PC-3 (cell line): ENCODE measurements at regions of chr4 and their contacts with region 1.

Region 1: GRCh38 chr4:157999743-158000142 is 173.1 kb downstream of the GASK1B start:
- DNase-seq: peak; percentile 58
- ATAC-seq: peak; percentile 91
- H3K4me3 ChIP-seq: no peak overlapping the region
- H3K27ac ChIP-seq: no peak overlapping the region
- H3K4me1 ChIP-seq: peaks cover 17% of the 10 kb centered on the region
- H3K27me3 ChIP-seq: no peaks in the 10 kb centered on the region
- CTCF ChIP-seq: no peak

Region 2: GRCh38 chr4:158020176-158020575 is 20.4 kb after region 1 on chr4:
- CTCF ChIA-PET with region 1: no interaction called
- POLR2A ChIA-PET with region 1: no interaction called
- intact Hi-C with region 1: loop called (anchors 1 kb)
- DNase-seq: peak; percentile 75
- ATAC-seq: peak; percentile 77
- H3K4me3 ChIP-seq: 0 out of 2 replicates have a peak overlapping the region, but pooled peaks have one; percentile 6
- H3K27ac ChIP-seq: peak overlapping the region; percentile 60
- H3K4me1 ChIP-seq: peaks cover 33% of the 10 kb centered on the region
- H3K27me3 ChIP-seq: no peaks in the 10 kb centered on the region
- CTCF ChIP-seq: no peak

Region 3: GRCh38 chr4:158102903-158103473 is 103.2 kb after region 1 on chr4:
- CTCF ChIA-PET with region 1: no interaction called
- POLR2A ChIA-PET with region 1: no interaction called
- intact Hi-C with region 1: no loop called
- DNase-seq: no peak
- ATAC-seq: no peak
- H3K4me3 ChIP-seq: no peak overlapping the region
- H3K27ac ChIP-seq: no peak overlapping the region
- H3K4me1 ChIP-seq: no peaks in the 10 kb centered on the region
- H3K27me3 ChIP-seq: no peaks in the 10 kb centered on the region
- CTCF ChIP-seq: no peak